A549 (cell line): ENCODE measurements at regions of chr20 and their contacts with region 1.

Region 1: DNA sequence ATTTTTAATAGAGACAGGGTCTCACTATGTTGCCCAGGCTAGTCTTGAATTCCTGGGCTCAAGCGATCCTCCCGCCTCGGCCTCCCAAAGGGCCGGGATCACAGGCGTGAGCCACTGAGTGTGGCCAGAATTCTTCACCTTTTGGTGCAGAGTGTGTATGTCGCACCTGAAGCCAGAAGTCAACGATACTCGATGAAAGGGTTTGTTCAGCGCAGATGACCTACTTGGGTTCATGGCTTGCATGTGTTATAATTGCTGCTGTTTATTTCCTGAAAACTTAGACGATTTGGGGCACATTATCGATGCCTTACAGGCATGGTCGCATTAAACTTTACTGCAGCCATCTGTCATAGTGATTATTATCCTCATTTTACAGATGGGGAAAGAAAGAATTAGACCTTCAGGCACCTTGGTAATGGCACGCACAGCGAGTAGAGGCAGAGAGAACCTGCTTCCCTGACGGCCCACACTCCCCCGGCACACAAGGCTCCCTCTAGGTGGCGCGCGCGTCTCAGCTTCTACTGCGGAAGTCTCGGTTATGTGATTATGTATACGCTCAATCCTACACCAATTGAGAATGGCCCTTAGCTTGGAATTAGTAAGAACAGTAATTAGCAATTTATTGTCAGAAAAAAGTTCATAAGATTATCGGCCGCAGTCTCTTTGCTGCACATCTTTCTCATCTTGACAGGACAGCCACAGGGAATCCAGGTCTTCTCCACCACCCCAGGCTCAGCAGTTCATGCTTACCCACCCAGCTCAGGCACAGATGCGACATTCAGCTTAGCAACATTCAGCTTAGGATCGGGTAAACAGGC is 212.8 kb upstream of the PROKR2 start:
- DNase-seq: peak; percentile 77 to 87
- ATAC-seq: peak; percentile 91 to 93
- H3K4me3 ChIP-seq: 0 out of 3 replicates have a peak overlapping the region, but pooled peaks have one; percentile 14
- H3K27ac ChIP-seq: peak overlapping the region; percentile 17 to 50; a peak in 4 of 6 replicates
- H3K4me1 ChIP-seq: peaks cover 16% of the 10 kb centered on the region
- CTCF ChIP-seq: peak; percentile 91
- EP300 ChIP-seq: no peak; a peak in 1 of 5 replicates
- POLR2A ChIP-seq: no peak
- RAD21 ChIP-seq: peak; percentile 93

Region 2: GRCh38 chr20:5543385-5543784 is 13.8 kb after region 1 on chr20:
- CTCF ChIA-PET with region 1: interaction called, 35 read pairs
- POLR2A ChIA-PET with region 1: no interaction called
- DNase-seq: no peak
- ATAC-seq: no peak
- H3K4me3 ChIP-seq: no peak overlapping the region
- H3K27ac ChIP-seq: no peak overlapping the region
- H3K4me1 ChIP-seq: no peaks in the 10 kb centered on the region
- CTCF ChIP-seq: no peak
- EP300 ChIP-seq: no peak
- POLR2A ChIP-seq: no peak
- RAD21 ChIP-seq: no peak

Region 3: GRCh38 chr20:5569021-5569420 is 39.5 kb after region 1 on chr20:
- CTCF ChIA-PET with region 1: interaction called, 27 read pairs
- POLR2A ChIA-PET with region 1: no interaction called
- DNase-seq: peak; percentile 52 to 75
- ATAC-seq: peak; percentile 86 to 87
- H3K4me3 ChIP-seq: no peak overlapping the region
- H3K27ac ChIP-seq: peak overlapping the region; percentile 10 to 61; a peak in 3 of 6 replicates
- H3K4me1 ChIP-seq: peaks cover 12% of the 10 kb centered on the region; the same call in 2 of the 3 replicates
- CTCF ChIP-seq: peak; percentile 87
- EP300 ChIP-seq: no peak
- POLR2A ChIP-seq: no peak
- RAD21 ChIP-seq: peak; percentile 94 to 97

Region 4: DNA sequence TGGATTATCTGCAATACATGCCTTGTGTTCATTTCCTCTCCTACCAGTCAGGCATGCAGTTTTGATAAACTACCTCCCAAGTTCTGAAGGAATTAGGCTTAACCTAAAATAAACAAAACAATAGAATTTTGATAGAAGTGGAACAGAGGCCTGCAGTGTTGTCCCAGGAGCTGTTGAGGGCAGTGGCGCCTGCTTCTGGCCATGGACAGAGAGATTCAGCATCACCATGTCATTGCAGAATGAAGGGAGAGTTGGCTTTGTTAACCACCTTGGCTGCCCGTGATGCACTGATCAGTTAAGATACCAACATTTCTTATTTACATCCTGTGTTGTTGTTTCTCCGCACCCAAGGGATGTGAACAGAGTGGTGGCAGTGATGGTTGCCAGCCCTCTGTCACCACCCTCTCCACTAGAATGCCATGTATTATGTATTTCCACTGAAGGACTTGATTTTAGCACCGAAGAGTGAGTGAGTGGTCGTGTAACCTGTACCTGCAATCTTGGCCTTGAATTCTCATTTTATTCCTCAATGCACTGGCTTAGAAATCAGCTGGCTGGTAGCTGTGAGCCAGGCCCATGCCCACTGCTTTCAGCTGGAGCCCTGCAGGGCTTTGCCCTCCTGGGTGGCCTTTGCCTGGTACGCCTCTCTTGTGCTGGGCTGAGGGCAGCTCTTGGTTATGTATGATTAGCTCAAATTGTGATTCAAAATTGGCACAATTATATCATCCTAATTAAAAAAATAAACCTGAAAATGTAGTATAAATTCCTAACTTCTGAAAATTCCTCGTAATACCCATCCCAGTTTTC is 277.1 kb after region 1 on chr20:
- CTCF ChIA-PET with region 1: interaction called, 10 read pairs
- POLR2A ChIA-PET with region 1: no interaction called
- DNase-seq: peak in 1 of 2 experiments; percentile 34
- ATAC-seq: peak in 1 of 2 experiments; percentile 64; a peak in 3 of 6 replicates
- H3K4me3 ChIP-seq: no peak overlapping the region
- H3K27ac ChIP-seq: peak overlapping the region in 1 of 2 experiments; percentile 74; a peak in 4 of 6 replicates
- H3K4me1 ChIP-seq: peaks cover 35% of the 10 kb centered on the region
- CTCF ChIP-seq: no peak
- EP300 ChIP-seq: no peak
- POLR2A ChIP-seq: no peak
- RAD21 ChIP-seq: peak; percentile 41 to 51; a peak in 4 of 5 replicates

Region 5: DNA sequence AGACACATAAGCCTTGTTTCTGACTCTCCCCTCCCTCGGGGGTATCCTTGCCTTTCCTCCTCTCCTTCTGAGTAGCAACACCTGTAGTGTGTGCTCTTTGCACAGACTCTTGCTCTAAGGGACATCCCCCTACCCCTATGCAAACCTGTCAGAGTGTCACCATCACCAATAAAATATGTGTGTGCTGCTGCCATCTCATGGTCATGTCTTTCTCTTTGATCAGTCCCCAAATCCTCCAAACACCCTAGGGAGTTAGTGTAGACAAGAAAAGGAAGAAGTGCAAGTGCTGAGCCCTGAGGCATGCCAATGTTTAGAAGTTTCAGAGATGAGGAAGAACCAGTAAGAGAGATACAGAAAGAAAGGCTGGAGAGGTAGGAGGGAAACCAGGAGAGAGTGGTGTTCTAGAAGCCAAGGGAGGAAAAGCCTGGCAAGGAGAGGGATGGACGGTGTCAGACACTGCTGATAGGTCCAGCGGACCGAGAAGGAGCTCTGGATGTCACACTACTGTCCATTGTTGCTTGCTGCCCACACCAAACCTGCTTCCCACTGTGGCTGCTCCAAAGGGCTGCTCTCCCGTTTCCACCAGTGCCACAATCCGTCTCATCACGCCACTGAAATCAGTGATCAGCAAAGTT is 404.4 kb after region 1 on chr20:
- CTCF ChIA-PET with region 1: interaction called, 142 read pairs
- POLR2A ChIA-PET with region 1: no interaction called
- DNase-seq: peak; percentile 41 to 48
- ATAC-seq: peak; percentile 81 to 83
- H3K4me3 ChIP-seq: no peak overlapping the region
- H3K27ac ChIP-seq: no peak overlapping the region
- H3K4me1 ChIP-seq: no peaks in the 10 kb centered on the region
- CTCF ChIP-seq: peak; percentile 72
- EP300 ChIP-seq: no peak
- POLR2A ChIP-seq: no peak
- RAD21 ChIP-seq: peak; percentile 73 to 84

Region 6: GRCh38 chr20:6008254-6008653 is 478.7 kb after region 1 on chr20:
- CTCF ChIA-PET with region 1: interaction called, 22 read pairs
- POLR2A ChIA-PET with region 1: interaction called, 4 read pairs
- DNase-seq: peak; percentile 45 to 78
- ATAC-seq: 0 out of 6 replicates have a peak, but pooled peaks of 1 of the 2 experiments have one; percentile 36
- H3K4me3 ChIP-seq: peak overlapping the region; percentile 70; the same call in 2 of the 3 replicates
- H3K27ac ChIP-seq: peak overlapping the region in 1 of 2 experiments; percentile 8; a peak in 3 of 6 replicates
- H3K4me1 ChIP-seq: peaks cover 27% of the 10 kb centered on the region
- CTCF ChIP-seq: no peak
- EP300 ChIP-seq: no peak
- POLR2A ChIP-seq: no peak
- RAD21 ChIP-seq: no peak

Region 7: GRCh38 chr20:6081236-6081635 is 551.7 kb after region 1 on chr20:
- CTCF ChIA-PET with region 1: interaction called, 153 read pairs
- POLR2A ChIA-PET with region 1: no interaction called
- DNase-seq: no peak
- ATAC-seq: no peak
- H3K4me3 ChIP-seq: no peak overlapping the region
- H3K27ac ChIP-seq: no peak overlapping the region
- H3K4me1 ChIP-seq: no peaks in the 10 kb centered on the region
- CTCF ChIP-seq: no peak
- EP300 ChIP-seq: no peak
- POLR2A ChIP-seq: no peak
- RAD21 ChIP-seq: no peak